ENCODE measurements at regions of chr5 and their contacts with region 1.

Region 1: GRCh38 chr5:78294248-78295034 is at the start of gene AP3B1:
- DNase-seq: peak; percentile 96 to 97 (median 97)
- H3K4me3 ChIP-seq: peak within 1 kb of the TSS; percentile 88 to 99
- H3K4me3 Mint-ChIP-seq: peak within 1 kb of the TSS; percentile 91 to 100 (median 99)
- H3K27ac ChIP-seq: peak within 1 kb of the TSS; percentile 85
- H3K27ac Mint-ChIP-seq: peak within 1 kb of the TSS; percentile 86 to 100 (median 99)
- H3K4me1 ChIP-seq: peaks cover 29% of the 10 kb centered on the region
- H3K4me1 Mint-ChIP-seq: peaks cover 31 to 49% (median 41%) of the 10 kb centered on the region in 4 donors
- H3K27me3 ChIP-seq: no peaks in the 10 kb centered on the region
- H3K27me3 Mint-ChIP-seq: no peaks in the 10 kb centered on the region
- total RNA-seq, gene AP3B1: 33.3 to 36.9 TPM

Region 2: DNA sequence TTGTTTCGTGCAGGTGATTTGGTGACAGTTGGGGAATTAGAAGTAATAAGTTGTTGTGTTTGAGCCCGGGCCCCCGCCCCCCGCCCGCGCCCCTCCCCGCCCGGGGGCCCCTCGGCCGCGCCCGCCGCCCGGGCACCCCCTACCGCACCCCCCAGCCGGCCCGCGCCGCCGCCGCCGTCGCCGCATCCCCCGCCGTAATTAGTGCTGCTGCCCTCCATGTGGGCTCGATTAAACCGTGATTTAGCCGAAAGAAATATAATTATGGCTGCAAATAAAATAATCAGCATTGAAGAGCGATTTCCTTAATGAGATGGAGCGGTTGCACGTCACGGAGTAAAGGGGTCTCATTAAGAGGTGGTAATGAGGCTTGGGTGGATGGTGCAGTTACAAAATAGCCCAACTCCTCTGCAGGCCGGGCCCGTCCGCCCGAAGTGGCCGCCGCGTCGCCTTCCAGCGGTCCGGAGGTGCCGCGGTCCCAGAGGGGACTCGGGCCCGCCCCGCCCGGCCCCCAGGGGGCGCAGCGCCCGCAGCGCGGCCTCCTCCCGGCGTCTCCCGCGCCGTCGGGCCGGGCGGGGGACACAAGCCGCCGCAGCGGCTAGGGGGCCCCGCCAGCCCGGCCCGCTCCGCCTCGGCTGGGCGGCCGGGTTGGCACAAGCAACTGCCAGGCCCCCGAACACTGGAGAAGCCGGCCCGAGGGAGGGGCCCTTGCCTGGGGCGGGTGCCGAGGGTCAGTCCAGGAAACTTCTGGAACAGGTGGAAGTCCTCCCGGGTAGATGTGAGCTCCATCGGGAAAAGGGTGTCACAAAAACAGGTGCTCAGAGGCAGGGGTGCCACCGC is 649.1 kb before region 1 on chr5:
- CTCF ChIA-PET with region 1: no interaction called
- POLR2A ChIA-PET with region 1: no interaction called
- intact Hi-C with region 1: loop called (anchors 10 kb)
- DNase-seq: peak in 2 of 5 donors; percentile 39 to 49
- H3K4me3 ChIP-seq: no peak overlapping the region
- H3K4me3 Mint-ChIP-seq: peak overlapping the region; percentile 60 to 82 (median 72)
- H3K27ac ChIP-seq: no peak overlapping the region
- H3K27ac Mint-ChIP-seq: peak overlapping the region in 3 of 7 donors; percentile 2 to 65 (median 55)
- H3K4me1 ChIP-seq: peaks cover 9% of the 10 kb centered on the region
- H3K4me1 Mint-ChIP-seq: peaks cover 13 to 41% (median 18%) of the 10 kb centered on the region in 4 donors
- H3K27me3 ChIP-seq: peaks cover 57% of the 10 kb centered on the region
- H3K27me3 Mint-ChIP-seq: peaks cover 58 to 74% of the 10 kb centered on the region in 2 donors

Region 3: GRCh38 chr5:78283105-78283504 is 11.3 kb before region 1 on chr5:
- CTCF ChIA-PET with region 1: interaction called, 11 read pairs
- POLR2A ChIA-PET with region 1: interaction called, 4 read pairs
- intact Hi-C with region 1: no loop called
- DNase-seq: no peak
- H3K4me3 ChIP-seq: no peak overlapping the region
- H3K4me3 Mint-ChIP-seq: no peak overlapping the region
- H3K27ac ChIP-seq: no peak overlapping the region
- H3K27ac Mint-ChIP-seq: peak overlapping the region in 2 of 7 donors; percentile 6 to 19
- H3K4me1 ChIP-seq: peaks cover 23% of the 10 kb centered on the region
- H3K4me1 Mint-ChIP-seq: peaks cover 29 to 56% (median 35%) of the 10 kb centered on the region in 4 donors
- H3K27me3 ChIP-seq: no peaks in the 10 kb centered on the region
- H3K27me3 Mint-ChIP-seq: no peaks in the 10 kb centered on the region

Region 4: DNA sequence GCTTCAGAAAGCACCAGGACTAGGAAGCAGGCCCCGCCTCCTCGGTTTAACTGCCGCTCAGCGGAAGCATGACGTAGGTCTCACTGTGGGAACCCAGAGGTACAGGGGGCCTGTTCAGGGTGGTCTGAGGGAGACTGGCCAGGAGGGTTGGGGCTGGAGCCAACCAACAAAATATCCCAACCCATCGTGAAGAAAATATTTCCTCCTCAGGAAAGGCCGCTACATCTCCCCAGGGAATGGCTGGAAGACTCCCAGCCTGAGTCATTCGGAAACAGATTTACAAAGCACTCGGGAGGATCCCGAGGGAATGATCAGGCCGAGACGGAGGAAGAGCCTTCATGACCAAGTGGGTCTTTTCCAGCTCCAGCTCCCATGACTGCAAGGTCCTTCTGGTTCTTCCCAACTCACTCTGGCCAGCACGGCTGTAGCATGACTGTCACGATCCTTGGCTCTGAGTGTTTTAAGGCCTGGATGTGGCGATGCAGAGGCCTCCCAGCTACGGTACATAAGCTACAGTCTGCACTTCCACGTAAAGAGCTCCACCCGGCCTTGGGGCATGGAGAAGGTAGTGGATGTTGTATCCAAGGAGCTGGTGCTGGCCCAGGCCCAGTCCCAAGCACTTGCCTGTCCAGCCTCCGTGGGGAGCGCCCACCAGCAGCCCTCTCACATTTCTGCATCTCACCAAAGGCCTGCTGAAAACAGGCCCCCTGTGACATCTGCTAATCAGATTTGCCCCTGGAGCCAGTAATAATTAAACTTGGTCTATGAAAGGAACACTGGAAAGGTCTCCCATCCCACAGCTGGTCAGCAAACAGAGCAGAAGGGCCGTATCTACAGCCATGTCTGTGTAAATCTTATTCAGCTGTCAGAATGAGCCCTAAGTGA is 253.5 kb after region 1 on chr5:
- CTCF ChIA-PET with region 1: no interaction called
- POLR2A ChIA-PET with region 1: no interaction called
- intact Hi-C with region 1: no loop called
- DNase-seq: no peak
- H3K4me3 ChIP-seq: no peak overlapping the region
- H3K4me3 Mint-ChIP-seq: no peak overlapping the region
- H3K27ac ChIP-seq: no peak overlapping the region
- H3K27ac Mint-ChIP-seq: peak overlapping the region in 1 of 7 donors; percentile 24
- H3K4me1 ChIP-seq: no peaks in the 10 kb centered on the region
- H3K4me1 Mint-ChIP-seq: peaks cover 0 to 2% (median 0%) of the 10 kb centered on the region in 4 donors
- H3K27me3 ChIP-seq: no peaks in the 10 kb centered on the region
- H3K27me3 Mint-ChIP-seq: peaks cover 0 to under 1% of the 10 kb centered on the region in 2 donors

Region 5: DNA sequence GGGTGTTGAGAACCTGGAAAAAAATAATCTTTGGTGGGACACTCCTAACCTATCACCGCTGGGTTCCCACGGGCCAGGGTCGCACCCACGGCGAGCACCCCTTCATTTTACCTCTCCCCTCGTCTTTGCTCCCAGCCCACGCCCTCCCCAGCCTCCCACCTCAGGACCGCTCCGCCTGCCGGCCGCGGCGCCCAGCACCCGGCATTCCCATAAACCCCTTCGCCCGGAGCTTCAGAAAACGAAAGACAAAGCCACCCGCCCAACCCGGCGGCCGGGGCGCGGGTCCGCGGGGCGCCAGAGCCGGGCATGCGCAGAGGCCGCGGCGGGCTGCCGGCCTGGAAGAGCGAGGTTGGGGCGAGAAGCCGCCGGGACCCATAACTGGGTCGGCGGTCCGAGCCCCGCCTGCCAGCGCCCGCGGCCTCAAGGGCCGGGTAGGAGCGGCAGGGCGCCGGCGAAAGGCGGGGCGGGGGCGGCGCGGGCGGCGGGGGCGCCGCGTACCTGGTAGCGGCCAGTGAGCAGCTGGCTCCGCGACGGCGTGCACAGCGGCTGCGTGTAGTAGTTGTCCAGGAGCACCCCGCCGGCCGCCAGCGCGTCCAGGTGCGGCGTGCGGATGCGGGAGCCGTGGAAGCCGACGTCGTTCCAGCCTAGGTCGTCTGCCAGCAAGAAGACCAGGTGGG is 690.1 kb after region 1 on chr5:
- CTCF ChIA-PET with region 1: no interaction called
- POLR2A ChIA-PET with region 1: interaction called, 6 read pairs
- intact Hi-C with region 1: loop called (anchors 10 kb)
- DNase-seq: peak; percentile 76 to 85 (median 80)
- H3K4me3 ChIP-seq: peak overlapping the region; percentile 34 to 70
- H3K4me3 Mint-ChIP-seq: peak overlapping the region; percentile 90 to 94 (median 92)
- H3K27ac ChIP-seq: peak overlapping the region; percentile 60
- H3K27ac Mint-ChIP-seq: peak overlapping the region; percentile 87 to 95 (median 93)
- H3K4me1 ChIP-seq: peaks cover 17% of the 10 kb centered on the region
- H3K4me1 Mint-ChIP-seq: peaks cover 18 to 31% (median 23%) of the 10 kb centered on the region in 4 donors
- H3K27me3 ChIP-seq: no peaks in the 10 kb centered on the region
- H3K27me3 Mint-ChIP-seq: no peaks in the 10 kb centered on the region

Region 6: GRCh38 chr5:79396265-79396664 is 1101.8 kb after region 1 on chr5:
- CTCF ChIA-PET with region 1: no interaction called
- POLR2A ChIA-PET with region 1: no interaction called
- intact Hi-C with region 1: no loop called
- DNase-seq: no peak
- H3K4me3 ChIP-seq: no peak overlapping the region
- H3K4me3 Mint-ChIP-seq: no peak overlapping the region
- H3K27ac ChIP-seq: no peak overlapping the region
- H3K27ac Mint-ChIP-seq: no peak overlapping the region
- H3K4me1 ChIP-seq: no peaks in the 10 kb centered on the region
- H3K4me1 Mint-ChIP-seq: no peaks in the 10 kb centered on the region
- H3K27me3 ChIP-seq: no peaks in the 10 kb centered on the region
- H3K27me3 Mint-ChIP-seq: no peaks in the 10 kb centered on the region